ENCODE measurements at regions of chr7 and their contacts with region 1.

Region 1: GRCh38 chr7:143214789-143215679 is 6.8 kb upstream of the TAS2R40 start:
- DNase-seq: peak; percentile 57
- H3K4me3 Mint-ChIP-seq: no peak overlapping the region
- H3K27ac Mint-ChIP-seq: no peak overlapping the region
- H3K4me1 Mint-ChIP-seq: no peaks in the 10 kb centered on the region
- H3K27me3 Mint-ChIP-seq: peaks cover 14% of the 10 kb centered on the region

Region 2: GRCh38 chr7:142357953-142358520 is 857.0 kb before region 1 on chr7:
- intact Hi-C with region 1: loop called (anchors 10 kb)
- DNase-seq: no peak
- H3K4me3 Mint-ChIP-seq: no peak overlapping the region
- H3K27ac Mint-ChIP-seq: no peak overlapping the region
- H3K4me1 Mint-ChIP-seq: peaks cover 20% of the 10 kb centered on the region
- H3K27me3 Mint-ChIP-seq: peaks cover 17% of the 10 kb centered on the region

Region 3: GRCh38 chr7:142535123-142535779 is 679.8 kb before region 1 on chr7:
- intact Hi-C with region 1: loop called (anchors 1 kb)
- DNase-seq: peak; percentile 58
- H3K4me3 Mint-ChIP-seq: peak overlapping the region; percentile 59
- H3K27ac Mint-ChIP-seq: peak overlapping the region; percentile 62
- H3K4me1 Mint-ChIP-seq: peaks cover 29% of the 10 kb centered on the region
- H3K27me3 Mint-ChIP-seq: no peaks in the 10 kb centered on the region

Region 4: GRCh38 chr7:142632291-142633134 is 582.5 kb before region 1 on chr7:
- intact Hi-C with region 1: loop called (anchors 10 kb)
- DNase-seq: peak; percentile 49
- H3K4me3 Mint-ChIP-seq: no peak overlapping the region
- H3K27ac Mint-ChIP-seq: no peak overlapping the region
- H3K4me1 Mint-ChIP-seq: peaks cover 18% of the 10 kb centered on the region
- H3K27me3 Mint-ChIP-seq: peaks cover 11% of the 10 kb centered on the region

Region 5: DNA sequence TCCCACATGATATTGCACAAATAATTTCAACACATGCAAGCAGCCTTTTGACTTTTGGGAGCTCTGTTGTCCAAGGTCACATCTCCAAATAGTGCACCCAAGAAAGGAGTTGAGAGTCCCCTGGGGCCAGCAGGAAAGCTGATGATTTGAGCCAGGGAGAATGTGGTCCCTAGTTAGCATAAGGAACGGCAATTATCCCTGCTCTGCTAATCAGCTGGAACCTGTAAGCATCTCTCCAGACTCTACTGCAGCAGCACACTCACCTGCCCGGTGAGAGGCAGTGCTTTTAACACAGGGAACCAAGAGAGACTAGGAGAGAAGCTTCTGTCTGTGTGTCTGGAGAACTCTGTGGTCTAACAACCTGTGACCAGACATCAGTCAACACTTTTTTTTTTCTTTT is 298.5 kb before region 1 on chr7:
- intact Hi-C with region 1: no loop called
- DNase-seq: no peak
- H3K4me3 Mint-ChIP-seq: no peak overlapping the region
- H3K27ac Mint-ChIP-seq: no peak overlapping the region
- H3K4me1 Mint-ChIP-seq: no peaks in the 10 kb centered on the region
- H3K27me3 Mint-ChIP-seq: peaks cover 17% of the 10 kb centered on the region

Region 6: GRCh38 chr7:143239813-143240212 is 24.8 kb after region 1 on chr7:
- intact Hi-C with region 1: no loop called
- DNase-seq: no peak
- H3K4me3 Mint-ChIP-seq: no peak overlapping the region
- H3K27ac Mint-ChIP-seq: peak overlapping the region; percentile 74
- H3K4me1 Mint-ChIP-seq: peaks cover 46% of the 10 kb centered on the region
- H3K27me3 Mint-ChIP-seq: peaks cover 13% of the 10 kb centered on the region

Region 7: GRCh38 chr7:143355450-143356385 is 140.7 kb after region 1 on chr7:
- intact Hi-C with region 1: no loop called
- DNase-seq: no peak
- H3K4me3 Mint-ChIP-seq: no peak overlapping the region
- H3K27ac Mint-ChIP-seq: no peak overlapping the region
- H3K4me1 Mint-ChIP-seq: no peaks in the 10 kb centered on the region
- H3K27me3 Mint-ChIP-seq: peaks cover 28% of the 10 kb centered on the region